Activated CD4-positive, alpha-beta memory T cell treated with anti-CD3 and anti-CD28 coated beads for 36 hours (primary cell): ENCODE measurements at regions of chr17 and their contacts with region 1.

Region 1: GRCh38 chr17:3738562-3739295 is 15.0 kb downstream of the HASPIN start:
- DNase-seq: peak; percentile 87
- H3K4me3 Mint-ChIP-seq: no peak overlapping the region
- H3K27ac Mint-ChIP-seq: peak overlapping the region; percentile 26
- H3K4me1 Mint-ChIP-seq: peaks cover 32% of the 10 kb centered on the region
- H3K27me3 Mint-ChIP-seq: no peaks in the 10 kb centered on the region

Region 2: DNA sequence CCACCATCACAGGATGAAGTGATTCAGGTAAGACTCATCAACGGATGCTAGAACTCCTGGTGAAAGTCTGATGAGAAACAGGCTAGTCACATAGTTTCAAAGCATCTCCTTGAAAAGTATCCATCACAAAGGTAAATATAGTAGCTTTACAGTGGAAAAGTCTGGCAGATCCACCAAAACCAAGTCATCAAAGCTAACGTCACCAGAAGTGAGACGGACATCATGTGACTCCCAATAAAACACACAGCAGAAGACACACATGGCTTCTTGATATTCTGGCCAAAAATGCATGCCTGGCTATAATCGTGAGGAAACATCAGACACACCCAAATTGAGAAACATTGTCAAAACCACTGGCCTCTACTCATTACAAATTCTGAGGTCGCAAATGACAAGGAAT is 163.2 kb before region 1 on chr17:
- CTCF ChIA-PET with region 1: no interaction called
- POLR2A ChIA-PET with region 1: no interaction called
- intact Hi-C with region 1: no loop called
- DNase-seq: no peak
- H3K4me3 Mint-ChIP-seq: no peak overlapping the region
- H3K27ac Mint-ChIP-seq: no peak overlapping the region
- H3K4me1 Mint-ChIP-seq: no peaks in the 10 kb centered on the region
- H3K27me3 Mint-ChIP-seq: no peaks in the 10 kb centered on the region

Region 3: DNA sequence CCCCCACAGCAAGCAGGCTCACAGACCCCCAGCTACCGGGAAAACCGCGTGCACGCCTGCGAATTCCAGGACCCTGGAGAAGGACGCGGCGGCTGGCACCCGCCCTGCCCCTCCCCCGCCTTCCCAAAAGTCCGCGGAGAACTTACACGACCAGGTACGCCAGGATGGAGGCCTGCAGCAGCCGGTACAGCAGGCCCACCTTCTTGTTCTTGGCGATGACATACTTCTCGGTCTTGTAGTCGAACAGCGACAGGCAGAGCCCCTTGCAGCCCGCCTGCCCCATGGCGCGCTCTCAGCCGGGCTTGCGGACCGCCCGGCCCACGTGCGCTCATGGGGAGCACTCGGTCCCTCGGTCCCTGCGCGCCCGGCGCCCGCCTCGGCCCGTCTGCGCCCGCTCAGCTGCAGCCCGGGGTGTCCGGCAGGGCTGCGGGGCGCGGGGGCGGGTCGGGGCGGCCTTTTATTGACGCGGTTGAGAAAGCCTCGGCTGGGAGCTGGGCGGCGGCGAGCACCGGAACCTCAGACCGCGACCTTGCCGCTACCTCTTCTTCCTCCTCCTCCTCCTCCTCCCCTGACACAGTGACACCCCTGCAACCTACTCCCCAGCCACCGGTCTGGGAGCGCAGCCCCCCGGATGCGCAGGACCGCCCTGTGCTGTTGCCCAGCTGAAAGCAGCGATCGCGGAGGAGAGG is 42.9 kb before region 1 on chr17 and contains the start of gene P2RX5:
- CTCF ChIA-PET with region 1: interaction called, 14 read pairs
- POLR2A ChIA-PET with region 1: no interaction called
- intact Hi-C with region 1: no loop called
- DNase-seq: peak; percentile 56
- H3K4me3 Mint-ChIP-seq: peak within 1 kb of the TSS; percentile 87
- H3K27ac Mint-ChIP-seq: peak within 1 kb of the TSS; percentile 76
- H3K4me1 Mint-ChIP-seq: peaks cover 20% of the 10 kb centered on the region
- H3K27me3 Mint-ChIP-seq: no peaks in the 10 kb centered on the region
- total RNA-seq, gene P2RX5: 37.6 to 43.2 TPM

Region 4: DNA sequence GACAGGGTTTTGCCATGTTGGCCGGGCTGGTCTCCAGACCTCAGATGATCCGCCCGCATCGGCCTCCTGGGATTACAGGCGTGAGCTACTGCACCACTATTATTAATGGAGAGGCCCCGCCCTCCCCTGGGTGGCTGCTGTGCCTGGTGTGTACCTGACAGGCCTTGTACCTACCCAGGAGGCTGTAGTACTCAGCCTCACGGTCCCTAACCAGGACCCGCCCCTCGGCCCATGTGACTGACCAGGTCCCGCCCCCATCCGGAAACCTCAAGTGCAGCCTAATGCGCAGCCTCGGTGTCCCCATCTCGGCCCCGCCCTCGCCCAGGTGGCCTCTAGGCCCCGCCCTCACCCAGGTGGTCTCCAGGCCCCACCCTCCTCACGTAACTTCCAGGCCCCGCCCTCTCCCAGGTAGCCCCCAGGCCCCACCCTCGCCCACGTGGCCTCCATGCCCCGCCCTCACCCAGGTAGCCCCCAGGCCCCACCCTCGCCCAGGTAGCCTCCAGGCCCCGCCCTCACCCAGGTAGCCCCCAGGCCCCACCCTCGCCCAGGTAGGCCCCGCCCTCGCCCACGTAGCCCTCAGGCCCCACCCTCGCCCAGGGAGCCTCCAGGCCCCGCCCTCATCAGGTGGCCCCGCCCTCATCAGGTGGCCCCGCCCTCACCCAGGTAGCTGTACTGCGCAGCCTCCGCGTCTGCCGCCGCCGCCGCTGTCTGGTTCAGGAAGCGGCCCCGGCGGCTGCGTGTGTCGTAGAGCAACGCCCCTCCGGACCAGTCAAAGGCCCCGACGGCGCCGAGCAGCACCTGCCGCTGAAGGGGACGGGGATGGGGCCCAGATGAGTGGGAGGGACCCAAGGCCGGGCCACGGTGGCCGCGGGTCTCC is 16.0 kb after region 1 on chr17:
- CTCF ChIA-PET with region 1: interaction called, 47 read pairs
- POLR2A ChIA-PET with region 1: interaction called, 3 read pairs
- intact Hi-C with region 1: no loop called
- DNase-seq: peak; percentile 81
- H3K4me3 Mint-ChIP-seq: peak overlapping the region; percentile 20
- H3K27ac Mint-ChIP-seq: no peak overlapping the region
- H3K4me1 Mint-ChIP-seq: peaks cover 26% of the 10 kb centered on the region
- H3K27me3 Mint-ChIP-seq: no peaks in the 10 kb centered on the region

Region 5: DNA sequence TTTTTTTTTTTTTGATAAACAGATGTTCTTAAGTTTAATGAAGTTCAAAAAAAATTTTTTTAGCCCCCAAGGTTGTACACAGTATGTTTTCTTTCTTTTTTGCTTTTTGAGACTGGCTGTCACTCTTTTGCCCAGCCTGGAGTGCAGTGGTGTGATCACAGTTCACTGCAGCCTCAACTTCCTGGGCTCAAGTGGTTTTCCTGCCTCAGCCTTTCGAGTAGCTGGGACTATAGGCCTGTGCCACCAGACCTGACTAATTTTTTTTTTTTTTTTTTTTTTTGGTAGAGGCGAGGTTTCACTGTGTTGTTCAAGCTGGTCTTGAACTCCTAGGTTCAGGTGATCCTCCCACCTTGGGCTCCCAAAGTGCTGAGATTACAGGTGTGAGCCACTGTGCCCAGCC is 49.5 kb after region 1 on chr17:
- CTCF ChIA-PET with region 1: interaction called, 33 read pairs
- POLR2A ChIA-PET with region 1: no interaction called
- intact Hi-C with region 1: loop called (anchors 2 kb)
- DNase-seq: no peak
- H3K4me3 Mint-ChIP-seq: no peak overlapping the region
- H3K27ac Mint-ChIP-seq: no peak overlapping the region
- H3K4me1 Mint-ChIP-seq: peaks cover 20% of the 10 kb centered on the region
- H3K27me3 Mint-ChIP-seq: no peaks in the 10 kb centered on the region

Region 6: GRCh38 chr17:3818786-3819185 is 80.1 kb after region 1 on chr17:
- CTCF ChIA-PET with region 1: interaction called, 402 read pairs
- POLR2A ChIA-PET with region 1: no interaction called
- intact Hi-C with region 1: no loop called
- DNase-seq: no peak
- H3K4me3 Mint-ChIP-seq: no peak overlapping the region
- H3K27ac Mint-ChIP-seq: no peak overlapping the region
- H3K4me1 Mint-ChIP-seq: no peaks in the 10 kb centered on the region
- H3K27me3 Mint-ChIP-seq: no peaks in the 10 kb centered on the region

Region 7: DNA sequence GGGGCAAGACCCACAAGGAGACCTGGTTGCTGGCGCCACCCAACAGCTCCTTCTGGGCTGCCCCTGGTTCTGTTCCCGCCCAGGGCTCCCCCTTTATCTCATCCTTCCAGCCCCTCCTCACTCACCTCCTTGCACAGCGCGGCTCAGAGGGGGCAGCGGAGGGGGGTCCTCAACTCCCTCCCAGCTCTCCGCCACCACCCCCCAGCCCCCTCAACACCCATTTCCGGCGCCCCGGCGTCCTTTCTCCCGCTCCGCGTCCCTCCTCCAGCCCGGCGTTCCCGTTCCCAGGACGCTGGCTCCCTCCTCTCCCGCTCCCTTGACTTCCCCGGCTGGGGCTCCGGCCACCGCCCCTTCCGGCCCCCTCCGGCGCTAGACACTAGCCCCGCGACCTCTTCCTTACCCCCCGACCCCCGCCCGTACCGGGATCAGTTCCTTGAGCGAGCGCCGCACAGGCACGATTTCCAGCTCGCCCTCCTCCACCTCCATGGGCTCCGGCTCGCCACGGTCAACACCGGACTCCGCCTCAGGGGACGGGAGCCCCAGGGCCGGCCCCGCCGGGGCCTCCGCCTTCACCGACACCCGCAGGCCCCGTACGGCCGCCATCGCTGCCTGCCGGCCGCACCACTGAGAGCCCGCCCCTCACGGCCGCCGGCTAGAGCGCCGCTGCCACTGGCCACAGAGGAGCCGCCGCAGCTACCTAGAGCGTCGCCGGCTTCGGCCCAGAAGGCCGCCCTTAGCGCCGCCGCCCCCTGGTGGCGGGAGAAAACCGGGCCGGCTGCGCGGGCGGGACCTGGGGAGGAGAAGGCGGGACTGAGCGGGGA is 107.1 kb after region 1 on chr17 and contains the start of gene NCBP3:
- CTCF ChIA-PET with region 1: interaction called, 125 read pairs
- POLR2A ChIA-PET with region 1: interaction called, 18 read pairs
- intact Hi-C with region 1: loop called (anchors 5 kb)
- DNase-seq: peak; percentile 93
- H3K4me3 Mint-ChIP-seq: peak within 1 kb of the TSS; percentile 94
- H3K27ac Mint-ChIP-seq: peak within 1 kb of the TSS; percentile 86
- H3K4me1 Mint-ChIP-seq: peaks cover 22% of the 10 kb centered on the region
- H3K27me3 Mint-ChIP-seq: no peaks in the 10 kb centered on the region
- total RNA-seq, gene NCBP3: 38.8 to 42.4 TPM